Pancreas (tissue), 10 donors: ENCODE measurements at regions of chr2 and their contacts with region 1.

Region 1: GRCh38 chr2:191013932-191014652 is at the start of gene STAT1:
- DNase-seq: peak; percentile 90 to 98 (median 94)
- ATAC-seq: peak; percentile 97 to 99 (median 98)
- H3K4me3 ChIP-seq: peak within 1 kb of the TSS; percentile 85 to 94 (median 88)
- H3K27ac ChIP-seq: peak within 1 kb of the TSS; percentile 63 to 95 (median 90)
- H3K4me1 ChIP-seq: peaks cover 5 to 21% (median 6%) of the 10 kb centered on the region in 3 donors
- H3K27me3 ChIP-seq: no peaks in the 10 kb centered on the region
- CTCF ChIP-seq: peak in 1 of 4 donors; percentile 7
- total RNA-seq, gene STAT1: 16.5 to 51.8 (median 28.6) TPM

Region 2: DNA sequence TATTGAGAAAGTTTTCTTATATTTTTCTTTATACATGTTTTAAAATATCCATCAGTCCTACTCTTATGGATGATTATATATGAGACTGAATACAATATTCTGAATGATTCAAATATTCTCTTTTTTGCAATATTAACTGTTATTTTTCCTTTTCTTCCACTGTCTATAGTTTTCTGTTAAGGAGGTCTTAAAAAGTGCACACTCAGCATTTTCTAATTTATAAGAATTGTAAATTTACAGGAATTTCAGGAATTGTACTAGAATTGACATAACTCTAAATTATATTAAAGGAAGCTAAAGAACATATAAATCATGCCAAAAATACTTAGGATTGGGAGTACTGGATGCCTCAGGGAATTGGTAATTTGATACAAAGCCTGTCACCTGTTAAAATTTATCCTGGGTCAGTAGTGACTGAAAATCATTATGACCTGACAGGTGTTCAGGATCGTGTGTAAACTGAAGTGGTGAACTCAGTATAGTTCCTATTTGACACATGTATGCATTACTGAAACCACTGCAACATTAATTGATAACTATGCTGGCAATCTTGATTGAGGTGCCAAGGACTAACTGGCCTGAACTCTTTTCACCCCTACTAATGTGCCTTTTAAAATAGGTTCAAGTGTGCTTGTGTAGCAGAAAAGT is 982.0 kb before region 1 on chr2:
- intact Hi-C with region 1: no loop called
- DNase-seq: no peak
- ATAC-seq: no peak
- H3K4me3 ChIP-seq: no peak overlapping the region
- H3K27ac ChIP-seq: no peak overlapping the region
- H3K4me1 ChIP-seq: no peaks in the 10 kb centered on the region
- H3K27me3 ChIP-seq: no peaks in the 10 kb centered on the region
- CTCF ChIP-seq: no peak

Region 3: DNA sequence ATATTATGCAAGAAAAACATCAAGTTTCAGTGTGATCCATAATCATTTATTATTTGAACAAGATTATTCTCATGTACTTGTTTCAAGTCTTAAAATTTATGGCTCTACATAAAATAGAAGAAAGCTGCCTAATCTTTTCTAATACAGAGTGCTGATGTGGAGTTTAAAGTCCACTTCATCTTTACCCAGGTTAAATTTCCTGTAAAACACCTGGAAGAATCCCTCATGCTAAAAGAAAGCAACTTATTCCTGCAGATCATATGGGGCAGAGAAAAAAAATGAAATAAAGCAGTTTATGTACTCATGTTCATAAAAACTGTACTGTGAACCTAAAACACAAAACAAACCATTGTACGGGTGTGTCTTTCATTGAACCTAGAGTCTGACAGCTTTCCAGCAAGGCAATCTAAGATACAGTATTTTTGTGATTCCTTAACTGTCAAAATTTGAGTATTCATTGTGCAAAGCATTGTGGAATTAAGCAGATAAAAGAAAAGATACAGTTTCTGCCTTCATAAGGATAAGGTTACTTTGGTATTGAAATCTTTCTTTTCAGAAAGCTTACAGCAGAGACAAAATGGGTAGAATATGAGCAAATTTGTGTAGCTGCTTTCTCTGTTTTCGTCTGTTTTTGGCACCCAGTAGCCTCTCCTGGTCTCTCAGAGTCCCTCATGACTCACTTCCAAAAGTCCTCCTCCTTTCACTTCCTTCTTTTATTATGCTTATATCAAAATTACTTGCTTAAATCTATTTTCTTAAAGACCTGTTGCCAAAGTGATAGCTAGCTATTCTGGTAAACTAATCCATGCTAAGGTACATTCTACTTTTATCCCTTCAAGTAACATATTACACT is 160.3 kb before region 1 on chr2:
- intact Hi-C with region 1: loop called in 1 of 3 experiments (anchors 10 kb)
- DNase-seq: no peak
- ATAC-seq: peak in 3 of 4 donors; percentile 21 to 49 (median 45)
- H3K4me3 ChIP-seq: no peak overlapping the region
- H3K27ac ChIP-seq: no peak overlapping the region
- H3K4me1 ChIP-seq: peaks cover 0 to 8% (median 7%) of the 10 kb centered on the region in 3 donors
- H3K27me3 ChIP-seq: no peaks in the 10 kb centered on the region
- CTCF ChIP-seq: no peak